GM12878 (cell line): ENCODE measurements at regions of chr19 and their contacts with region 1.

Region 1: GRCh38 chr19:21940684-21941083 is 70.1 kb downstream of the ZNF208 start:
- DNase-seq: no peak
- ATAC-seq: no peak
- H3K4me3 ChIP-seq: no peak overlapping the region
- H3K27ac ChIP-seq: no peak overlapping the region
- H3K4me1 ChIP-seq: no peaks in the 10 kb centered on the region
- H3K27me3 ChIP-seq: no peaks in the 10 kb centered on the region
- CTCF ChIP-seq: no peak
- EP300 ChIP-seq: no peak
- POLR2A ChIP-seq: no peak
- RAD21 ChIP-seq: no peak

Region 2: DNA sequence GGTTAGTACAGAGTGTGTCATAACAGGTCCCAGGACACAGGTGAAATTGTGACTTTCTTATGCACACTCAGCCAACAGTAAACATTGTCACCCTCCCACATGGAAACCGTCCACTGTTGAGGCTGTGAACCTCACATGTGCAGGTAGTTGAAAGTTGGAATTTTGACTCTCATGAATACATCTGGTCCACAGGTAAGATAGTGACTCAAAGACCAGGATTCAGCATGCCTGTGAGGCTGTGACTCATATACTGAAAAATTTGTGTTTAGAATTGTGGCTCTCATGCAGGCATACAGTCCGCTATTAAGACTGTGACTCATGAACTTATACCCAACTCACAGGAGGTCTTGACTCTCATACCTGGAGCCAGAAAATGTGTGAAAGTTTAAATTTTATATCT is 994.5 kb after region 1 on chr19:
- CTCF ChIA-PET with region 1: no interaction called
- POLR2A ChIA-PET with region 1: no interaction called
- RAD21 ChIA-PET with region 1: no interaction called
- SMC1A ChIA-PET with region 1: no interaction called
- in situ Hi-C with region 1: loop called (anchors 5 kb)
- intact Hi-C with region 1: no loop called
- DNase-seq: no peak
- ATAC-seq: no peak
- H3K4me3 ChIP-seq: no peak overlapping the region
- H3K27ac ChIP-seq: no peak overlapping the region
- H3K4me1 ChIP-seq: no peaks in the 10 kb centered on the region
- H3K27me3 ChIP-seq: no peaks in the 10 kb centered on the region
- CTCF ChIP-seq: no peak
- EP300 ChIP-seq: no peak
- POLR2A ChIP-seq: no peak
- RAD21 ChIP-seq: no peak